ENCODE measurements at regions of chr17 and their contacts with region 1.

Region 1: DNA sequence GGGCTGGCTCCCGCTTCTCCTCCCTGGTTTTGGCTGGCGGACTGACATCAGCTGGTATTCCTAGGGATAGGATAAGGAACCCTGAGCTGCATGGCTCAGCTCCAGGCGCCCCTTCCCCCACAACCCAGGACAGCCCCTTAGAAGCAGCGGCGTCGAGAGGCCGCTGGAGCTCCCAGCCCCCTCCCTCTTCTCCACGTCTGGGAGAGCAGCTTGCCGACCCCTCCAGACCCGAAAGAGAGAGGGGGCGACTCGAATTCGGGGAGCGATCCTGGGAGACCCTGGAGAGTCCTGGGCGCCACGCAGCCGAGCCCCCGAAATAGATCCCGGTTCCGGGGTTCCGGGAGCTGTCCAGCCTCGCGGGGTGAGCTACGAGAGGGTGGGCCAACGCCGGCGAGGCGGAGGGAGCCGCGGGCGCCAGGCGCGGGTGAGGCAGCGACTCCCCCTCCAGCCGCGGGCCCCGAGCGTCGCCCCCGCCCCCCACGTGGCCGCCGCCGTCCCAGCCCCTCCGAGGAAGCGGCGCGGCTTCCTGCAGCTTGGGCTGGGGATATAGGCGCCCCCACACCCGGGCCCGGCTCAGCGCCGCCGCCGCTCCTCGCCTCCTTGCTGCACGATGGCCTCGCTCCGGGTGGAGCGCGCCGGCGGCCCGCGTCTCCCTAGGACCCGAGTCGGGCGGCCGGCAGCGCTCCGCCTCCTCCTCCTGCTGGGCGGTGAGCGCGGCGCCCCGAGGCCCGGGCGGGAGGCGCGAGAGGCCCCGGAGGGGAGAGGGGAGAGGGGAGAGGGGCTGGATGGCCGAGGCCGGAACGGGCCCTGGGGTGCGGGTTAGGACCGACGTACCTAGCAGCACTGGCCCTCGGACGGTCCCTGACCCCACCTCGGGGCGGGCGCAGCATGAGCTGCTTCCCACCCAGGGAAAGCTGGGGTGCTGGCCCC is at the start of gene RAMP2:
- DNase-seq: peak in 1 of 2 donors; percentile 89
- H3K4me3 ChIP-seq: peak within 1 kb of the TSS; percentile 21
- CTCF ChIP-seq: no peak
- POLR2A ChIP-seq: no peak
- total RNA-seq, gene RAMP2: 9.6 to 34.2 (median 12.0) TPM

Region 2: DNA sequence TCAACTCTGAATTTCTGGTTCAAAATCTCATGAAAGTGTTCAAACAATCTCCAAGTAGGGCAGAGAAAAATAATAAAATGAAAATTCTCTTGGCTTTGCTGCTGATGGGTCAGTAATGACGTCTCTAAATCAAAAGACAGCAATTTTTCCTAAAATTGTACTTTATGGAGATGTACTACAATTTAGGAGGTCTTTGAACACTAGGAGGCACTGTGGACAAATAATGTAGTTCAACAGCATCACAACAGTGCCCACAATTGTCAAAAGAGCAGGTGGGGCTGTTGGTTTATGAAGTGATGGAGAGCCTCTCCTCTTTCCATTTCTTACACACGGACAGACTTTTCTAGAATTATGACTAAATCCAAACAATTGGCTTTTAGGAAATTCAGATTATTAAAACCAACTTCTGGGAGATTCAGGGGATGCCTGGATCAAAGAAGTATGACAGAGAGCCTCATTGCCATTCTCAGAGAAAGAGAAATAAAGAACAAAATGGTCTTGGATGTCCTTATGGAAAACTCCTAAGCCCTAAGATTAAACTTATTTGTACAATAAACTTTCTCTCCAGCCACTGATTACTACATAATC is 39.8 kb before region 1 on chr17:
- intact Hi-C with region 1: loop called (anchors 5 kb)
- DNase-seq: no peak
- H3K4me3 ChIP-seq: no peak overlapping the region
- CTCF ChIP-seq: no peak
- POLR2A ChIP-seq: no peak

Measured in lower leg skin (tissue), 4 donors.